Activated B cell treated with CpG ODN at 0.5 μM for 24 hours (primary cell): ENCODE measurements at regions of chr1 and their contacts with region 1.

Region 1: GRCh38 chr1:173867753-173868265 is at the start of gene GAS5:
- DNase-seq: peak; percentile 95
- ATAC-seq: peak; percentile 80
- H3K4me3 Mint-ChIP-seq: peak within 1 kb of the TSS; percentile 97
- H3K27ac Mint-ChIP-seq: peak within 1 kb of the TSS; percentile 97
- H3K4me1 Mint-ChIP-seq: peaks cover 79% of the 10 kb centered on the region
- H3K27me3 Mint-ChIP-seq: no peaks in the 10 kb centered on the region
- CTCF ChIP-seq: no peak
- total RNA-seq, gene GAS5: 701 and 722 TPM in 2 replicates

Region 2: GRCh38 chr1:173134029-173134428 is 733.8 kb before region 1 on chr1:
- CTCF ChIA-PET with region 1: no interaction called
- POLR2A ChIA-PET with region 1: no interaction called
- intact Hi-C with region 1: no loop called
- DNase-seq: no peak
- ATAC-seq: no peak
- H3K4me3 Mint-ChIP-seq: no peak overlapping the region
- H3K27ac Mint-ChIP-seq: no peak overlapping the region
- H3K4me1 Mint-ChIP-seq: no peaks in the 10 kb centered on the region
- H3K27me3 Mint-ChIP-seq: no peaks in the 10 kb centered on the region
- CTCF ChIP-seq: no peak

Region 3: GRCh38 chr1:173429471-173430402 is 438.1 kb before region 1 on chr1:
- CTCF ChIA-PET with region 1: interaction called, 3 read pairs
- POLR2A ChIA-PET with region 1: interaction called, 14 read pairs
- intact Hi-C with region 1: loop called (anchors 1 kb)
- DNase-seq: peak; percentile 54
- ATAC-seq: peak; percentile 87
- H3K4me3 Mint-ChIP-seq: peak overlapping the region; percentile 71
- H3K27ac Mint-ChIP-seq: peak overlapping the region; percentile 87
- H3K4me1 Mint-ChIP-seq: peaks cover 25% of the 10 kb centered on the region
- H3K27me3 Mint-ChIP-seq: no peaks in the 10 kb centered on the region
- CTCF ChIP-seq: no peak

Region 4: GRCh38 chr1:173714759-173715537 is 152.9 kb before region 1 on chr1 and contains the start of gene KLHL20:
- CTCF ChIA-PET with region 1: no interaction called
- POLR2A ChIA-PET with region 1: interaction called, 15 read pairs
- intact Hi-C with region 1: loop called (anchors 2 kb)
- DNase-seq: peak; percentile 71
- ATAC-seq: peak; percentile 96
- H3K4me3 Mint-ChIP-seq: peak within 1 kb of the TSS; percentile 93
- H3K27ac Mint-ChIP-seq: peak within 1 kb of the TSS; percentile 89
- H3K4me1 Mint-ChIP-seq: peaks cover 22% of the 10 kb centered on the region
- H3K27me3 Mint-ChIP-seq: peaks cover 14% of the 10 kb centered on the region
- CTCF ChIP-seq: no peak
- total RNA-seq, gene KLHL20: 19.6 and 26.1 TPM in 2 replicates

Region 5: DNA sequence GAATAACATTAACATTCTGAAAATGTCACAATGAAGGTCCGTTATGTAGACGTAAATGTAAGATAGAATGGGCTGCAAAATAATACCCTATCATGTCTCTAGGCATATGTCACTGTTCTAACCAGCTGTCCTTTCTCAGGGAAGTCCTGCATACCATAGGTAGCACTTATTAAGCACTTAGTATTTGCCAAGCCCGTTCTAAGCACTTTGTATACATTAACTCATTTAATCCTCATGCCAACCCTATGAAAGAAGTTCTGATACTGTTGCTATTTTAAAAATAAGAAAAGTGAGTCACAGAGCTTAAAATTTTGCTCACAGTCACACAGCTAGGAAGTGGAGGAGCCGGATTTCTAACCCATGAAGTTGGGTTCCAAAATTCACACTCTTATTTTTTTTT is 15.7 kb before region 1 on chr1:
- CTCF ChIA-PET with region 1: no interaction called
- POLR2A ChIA-PET with region 1: interaction called, 11 read pairs
- intact Hi-C with region 1: no loop called
- DNase-seq: no peak
- ATAC-seq: no peak
- H3K4me3 Mint-ChIP-seq: no peak overlapping the region
- H3K27ac Mint-ChIP-seq: no peak overlapping the region
- H3K4me1 Mint-ChIP-seq: no peaks in the 10 kb centered on the region
- H3K27me3 Mint-ChIP-seq: no peaks in the 10 kb centered on the region
- CTCF ChIP-seq: no peak

Region 6: GRCh38 chr1:173954179-173954578 is 86.4 kb after region 1 on chr1:
- CTCF ChIA-PET with region 1: no interaction called
- POLR2A ChIA-PET with region 1: no interaction called
- intact Hi-C with region 1: no loop called
- DNase-seq: no peak
- ATAC-seq: no peak
- H3K4me3 Mint-ChIP-seq: no peak overlapping the region
- H3K27ac Mint-ChIP-seq: no peak overlapping the region
- H3K4me1 Mint-ChIP-seq: no peaks in the 10 kb centered on the region
- H3K27me3 Mint-ChIP-seq: no peaks in the 10 kb centered on the region
- CTCF ChIP-seq: no peak

Region 7: GRCh38 chr1:174005032-174005431 is 137.2 kb after region 1 on chr1:
- CTCF ChIA-PET with region 1: no interaction called
- POLR2A ChIA-PET with region 1: interaction called, 13 read pairs
- intact Hi-C with region 1: no loop called
- DNase-seq: no peak
- ATAC-seq: peak; percentile 92
- H3K4me3 Mint-ChIP-seq: no peak overlapping the region
- H3K27ac Mint-ChIP-seq: no peak overlapping the region
- H3K4me1 Mint-ChIP-seq: peaks cover 68% of the 10 kb centered on the region
- H3K27me3 Mint-ChIP-seq: no peaks in the 10 kb centered on the region
- CTCF ChIP-seq: no peak

Region 8: DNA sequence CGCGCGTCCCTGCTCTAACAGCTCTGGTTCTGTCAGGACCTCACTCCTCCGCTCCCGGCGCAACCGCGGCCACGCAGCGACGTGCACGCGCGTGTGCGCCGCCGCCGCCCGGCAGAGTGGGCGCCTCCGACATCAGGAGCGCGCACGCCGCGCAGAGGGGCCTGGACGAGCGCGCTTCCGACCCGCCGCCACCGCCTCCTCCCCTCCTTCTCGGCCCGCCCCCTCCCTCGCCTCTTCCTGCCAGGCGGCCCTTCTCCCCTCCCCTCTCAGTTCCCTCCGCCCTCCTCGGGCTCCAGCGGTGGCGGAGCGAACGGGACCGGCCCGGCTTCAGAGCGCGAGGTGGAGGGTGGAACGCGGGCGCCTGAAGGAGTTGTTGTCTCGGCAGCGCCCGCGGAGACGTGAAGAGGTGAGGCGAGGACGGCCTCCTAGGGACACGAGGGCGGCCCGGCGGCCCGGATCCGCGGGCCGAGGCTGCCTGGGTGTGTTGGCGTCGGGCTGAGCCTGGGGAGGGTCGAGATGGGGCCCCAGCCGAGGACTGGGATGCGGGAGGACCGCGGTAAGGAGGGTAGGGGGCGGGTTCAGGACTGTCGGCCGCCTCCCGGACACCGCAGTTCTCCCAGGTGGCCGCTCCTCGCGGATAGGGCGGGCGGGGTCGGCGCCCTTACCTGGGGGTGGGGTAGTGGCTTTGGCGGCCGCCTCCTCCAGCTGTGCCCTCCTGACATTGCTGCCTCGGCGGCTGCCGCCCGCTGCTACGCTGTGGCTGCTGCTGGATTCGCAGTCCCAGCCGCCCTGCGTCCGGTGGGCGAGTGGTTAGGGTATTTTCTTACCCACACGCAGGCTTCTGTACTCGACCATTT is 291.7 kb after region 1 on chr1 and contains the start of gene RABGAP1L:
- CTCF ChIA-PET with region 1: no interaction called
- POLR2A ChIA-PET with region 1: interaction called, 4 read pairs
- intact Hi-C with region 1: loop called (anchors 1 kb)
- DNase-seq: peak; percentile 88
- ATAC-seq: peak; percentile 84
- H3K4me3 Mint-ChIP-seq: peak within 1 kb of the TSS; percentile 96
- H3K27ac Mint-ChIP-seq: peak within 1 kb of the TSS; percentile 99
- H3K4me1 Mint-ChIP-seq: peaks cover 72% of the 10 kb centered on the region
- H3K27me3 Mint-ChIP-seq: no peaks in the 10 kb centered on the region
- CTCF ChIP-seq: no peak
- total RNA-seq, gene RABGAP1L: 103 and 126 TPM in 2 replicates

Region 9: GRCh38 chr1:174743654-174744561 is 876.1 kb after region 1 on chr1:
- CTCF ChIA-PET with region 1: no interaction called
- POLR2A ChIA-PET with region 1: no interaction called
- intact Hi-C with region 1: loop called (anchors 10 kb)
- DNase-seq: no peak
- ATAC-seq: peak; percentile 31
- H3K4me3 Mint-ChIP-seq: no peak overlapping the region
- H3K27ac Mint-ChIP-seq: no peak overlapping the region
- H3K4me1 Mint-ChIP-seq: peaks cover 38% of the 10 kb centered on the region
- H3K27me3 Mint-ChIP-seq: no peaks in the 10 kb centered on the region
- CTCF ChIP-seq: no peak